MCF 10A (cell line): ENCODE measurements at regions of chr14 and their contacts with region 1.

Region 1: DNA sequence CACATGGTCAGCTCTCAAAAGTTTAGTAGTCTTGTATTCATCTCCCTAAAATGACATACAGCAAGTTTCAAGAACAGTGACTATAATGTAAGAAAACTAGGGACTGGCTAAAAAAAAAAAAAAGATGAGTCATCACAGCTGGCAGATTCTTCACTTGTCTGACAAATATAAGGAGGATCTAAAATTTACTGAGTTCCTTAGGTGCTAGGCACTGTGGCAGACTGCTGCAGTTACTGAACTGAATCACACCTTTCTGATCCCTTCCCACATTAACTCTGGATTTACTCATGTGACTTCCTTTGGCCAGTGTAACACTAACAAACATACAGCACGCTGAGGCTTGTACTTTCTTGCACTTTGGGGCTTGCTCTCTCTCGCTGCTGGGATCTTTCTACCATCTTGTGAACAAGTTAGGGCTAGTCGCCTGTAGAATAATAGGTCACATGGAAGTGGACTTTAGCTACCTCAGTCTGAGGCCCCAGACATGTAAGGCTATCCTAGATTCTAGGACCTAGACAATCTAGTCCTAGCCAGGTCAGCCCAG is 32.1 kb downstream of the BAZ1A start:
- DNase-seq: peak; percentile 95
- H3K4me3 Mint-ChIP-seq: peak overlapping the region; percentile 51
- H3K27ac Mint-ChIP-seq: peak overlapping the region; percentile 66
- H3K4me1 Mint-ChIP-seq: peaks cover 22% of the 10 kb centered on the region
- H3K27me3 Mint-ChIP-seq: no peaks in the 10 kb centered on the region
- CTCF ChIP-seq: no peak

Region 2: GRCh38 chr14:34604995-34605394 is 238.1 kb before region 1 on chr14:
- CTCF ChIA-PET with region 1: no interaction called
- POLR2A ChIA-PET with region 1: no interaction called
- intact Hi-C with region 1: no loop called
- DNase-seq: peak; percentile 13
- H3K4me3 Mint-ChIP-seq: no peak overlapping the region
- H3K27ac Mint-ChIP-seq: no peak overlapping the region
- H3K4me1 Mint-ChIP-seq: no peaks in the 10 kb centered on the region
- H3K27me3 Mint-ChIP-seq: no peaks in the 10 kb centered on the region
- CTCF ChIP-seq: no peak

Region 3: DNA sequence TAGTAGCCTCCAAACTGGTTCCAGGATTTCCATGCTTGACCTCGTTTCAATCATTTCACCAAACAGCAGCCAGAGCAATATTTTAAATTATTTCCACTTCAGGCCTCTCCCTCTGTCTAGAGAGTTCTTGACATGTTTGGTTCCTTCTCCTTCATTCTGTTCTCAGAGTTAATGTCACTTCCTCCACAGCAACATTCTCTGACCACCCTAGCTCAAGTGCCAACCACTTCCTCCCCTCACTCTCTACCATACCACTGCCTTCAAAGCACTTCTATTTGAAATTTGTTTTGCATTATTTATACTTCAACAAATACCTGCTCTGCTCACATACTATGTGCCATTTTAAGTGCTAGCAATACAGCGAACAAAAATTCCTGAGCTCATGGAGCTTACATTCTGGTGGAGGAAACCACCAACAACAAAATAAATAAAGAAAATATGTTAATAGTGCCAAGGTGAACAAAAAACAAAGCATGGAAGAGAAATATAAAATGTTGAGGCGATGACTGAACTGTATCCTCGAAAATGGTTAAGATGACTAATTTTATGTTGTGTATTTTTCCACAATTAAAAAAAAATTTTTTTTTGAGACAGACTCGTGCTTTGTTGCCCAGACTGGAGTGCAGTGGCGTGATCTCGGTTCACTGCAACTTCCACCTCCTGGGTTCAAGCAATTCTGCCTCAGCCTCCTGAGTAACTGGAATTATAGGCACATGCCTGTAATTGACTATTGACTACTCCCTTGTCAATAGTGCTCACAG is 14.8 kb after region 1 on chr14:
- CTCF ChIA-PET with region 1: interaction called, 3 read pairs
- POLR2A ChIA-PET with region 1: interaction called, 16 read pairs
- intact Hi-C with region 1: no loop called
- DNase-seq: no peak
- H3K4me3 Mint-ChIP-seq: no peak overlapping the region
- H3K27ac Mint-ChIP-seq: no peak overlapping the region
- H3K4me1 Mint-ChIP-seq: peaks cover 7% of the 10 kb centered on the region
- H3K27me3 Mint-ChIP-seq: no peaks in the 10 kb centered on the region
- CTCF ChIP-seq: no peak

Region 4: DNA sequence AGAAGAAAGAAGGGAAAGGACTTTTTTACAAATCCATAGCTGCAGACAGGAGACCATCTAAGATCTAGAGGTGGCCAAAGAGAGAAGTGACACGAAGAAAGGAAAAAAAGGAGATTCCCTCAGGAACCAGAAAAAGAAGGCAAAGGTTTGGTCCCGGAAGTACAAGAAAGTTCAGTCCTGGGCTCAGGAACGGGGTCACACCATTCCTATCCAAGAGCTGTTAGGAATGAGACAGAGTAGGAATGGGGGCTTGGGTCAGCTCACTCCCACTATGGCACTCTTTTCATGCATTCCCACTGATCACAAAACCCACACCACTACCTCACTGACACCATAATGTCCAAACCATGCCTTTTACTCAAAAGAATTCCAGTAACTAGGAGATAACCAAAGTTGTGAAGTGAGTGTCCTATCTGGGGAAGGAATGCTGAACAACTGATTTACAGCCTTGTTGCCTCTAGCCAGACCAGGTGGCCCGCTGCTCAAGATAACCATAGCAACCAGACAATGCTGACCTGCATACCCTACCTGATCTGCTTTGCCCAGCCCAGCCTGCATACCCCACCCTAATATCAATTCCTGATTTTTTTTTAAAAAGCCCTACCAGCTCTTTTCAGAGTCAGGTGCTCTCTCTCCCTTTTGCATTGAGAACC is 270.4 kb after region 1 on chr14:
- CTCF ChIA-PET with region 1: no interaction called
- POLR2A ChIA-PET with region 1: no interaction called
- intact Hi-C with region 1: no loop called
- DNase-seq: no peak
- H3K4me3 Mint-ChIP-seq: no peak overlapping the region
- H3K27ac Mint-ChIP-seq: peak overlapping the region; percentile 4
- H3K4me1 Mint-ChIP-seq: peaks cover 7% of the 10 kb centered on the region
- H3K27me3 Mint-ChIP-seq: no peaks in the 10 kb centered on the region
- CTCF ChIP-seq: no peak